ENCODE measurements at regions of chr14 and their contacts with region 1.

Region 1: GRCh38 chr14:36751139-36751538 is 89.5 kb downstream of the PAX9 start:
- DNase-seq: peak in 1 of 3 donors; percentile 69
- ATAC-seq: peak; percentile 98
- H3K4me3 ChIP-seq: no peak overlapping the region
- H3K4me1 ChIP-seq: no peaks in the 10 kb centered on the region
- CTCF ChIP-seq: no peak

Region 2: DNA sequence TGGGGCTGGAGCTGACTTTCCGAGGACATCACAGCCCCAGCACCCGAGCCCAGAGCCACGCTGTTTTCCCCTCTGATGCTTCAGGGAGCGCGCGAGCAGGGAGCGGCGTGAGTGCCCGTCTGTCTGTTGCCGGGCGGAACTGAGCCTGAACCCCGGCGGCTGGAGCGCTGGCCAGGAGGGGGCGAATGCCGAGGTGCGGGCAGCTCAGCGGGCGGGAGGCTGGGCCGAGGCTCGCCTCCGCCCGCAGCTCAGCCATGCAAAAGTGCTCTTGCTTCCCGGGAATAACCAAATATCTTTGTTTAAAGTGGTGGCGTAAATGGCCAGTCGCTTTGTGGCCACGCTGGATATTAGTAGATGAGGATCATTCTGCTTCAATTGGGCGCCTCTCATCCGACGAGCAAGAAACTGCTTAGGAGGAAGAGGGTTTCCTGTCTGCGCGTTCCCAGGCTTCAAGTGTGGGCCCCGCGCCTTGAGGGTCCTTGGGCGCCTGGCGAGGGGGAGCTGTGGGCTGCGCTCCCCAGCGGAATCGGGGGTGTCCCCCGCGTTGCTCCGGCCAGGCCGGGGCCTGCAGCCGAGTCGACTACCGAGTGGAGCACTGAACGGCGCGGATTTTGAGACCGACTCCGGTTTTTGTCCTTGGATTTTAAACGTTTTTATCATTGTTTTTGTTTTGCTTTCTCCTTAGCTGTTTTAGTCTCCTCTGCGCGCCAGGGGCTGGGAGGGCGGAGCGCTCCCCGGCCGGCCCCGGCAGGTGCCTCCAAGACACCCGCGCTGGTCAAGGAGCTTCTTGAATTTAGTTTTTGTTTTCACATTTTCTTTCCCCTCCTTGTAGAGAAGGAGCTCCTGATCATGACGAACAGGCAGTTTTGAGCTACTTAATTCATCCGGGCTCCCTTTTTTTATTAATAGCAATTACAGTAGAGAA is 230.3 kb before region 1 on chr14:
- intact Hi-C with region 1: no loop called
- DNase-seq: peak in 2 of 3 donors; percentile 34 to 58
- ATAC-seq: peak; percentile 71
- H3K4me3 ChIP-seq: no peak overlapping the region
- H3K4me1 ChIP-seq: peaks cover 25% of the 10 kb centered on the region
- CTCF ChIP-seq: no peak

Region 3: GRCh38 chr14:36556811-36557433 is 194.2 kb before region 1 on chr14:
- intact Hi-C with region 1: loop called in 1 of 2 experiments (anchors 5 kb)
- DNase-seq: peak in 2 of 3 donors; percentile 33 to 40
- ATAC-seq: no peak
- H3K4me3 ChIP-seq: no peak overlapping the region
- H3K4me1 ChIP-seq: no peaks in the 10 kb centered on the region
- CTCF ChIP-seq: no peak